ENCODE measurements at regions of chr5 and their contacts with region 1.

Region 1: GRCh38 chr5:59496524-59497134 is 396.9 kb downstream of the PDE4D start:
- DNase-seq: no peak
- H3K4me3 Mint-ChIP-seq: no peak overlapping the region
- H3K27ac Mint-ChIP-seq: no peak overlapping the region
- H3K4me1 Mint-ChIP-seq: no peaks in the 10 kb centered on the region
- H3K27me3 Mint-ChIP-seq: peaks cover 12% of the 10 kb centered on the region

Region 2: GRCh38 chr5:59390074-59390659 is 106.5 kb before region 1 on chr5:
- intact Hi-C with region 1: loop called (anchors 2 kb)
- DNase-seq: no peak
- H3K4me3 Mint-ChIP-seq: no peak overlapping the region
- H3K27ac Mint-ChIP-seq: no peak overlapping the region
- H3K4me1 Mint-ChIP-seq: no peaks in the 10 kb centered on the region
- H3K27me3 Mint-ChIP-seq: peaks cover 15% of the 10 kb centered on the region

Measured in activated T-helper 2 cell treated with anti-CD3 and anti-CD28 coated beads, Interferon-gamma antibody, Interleukin-2, Interleukin-4, amounts not matched to agents 10 μg/mL and 5 μg/mL and 100 μg/mL, durations not matched to agents 14 hours and 24 hours and 36 hours (primary cell).